H1 (cell line): ENCODE measurements at regions of chr17 and their contacts with region 1.

Region 1: GRCh38 chr17:45385331-45385997 is 47.2 kb downstream of the ARHGAP27 start:
- DNase-seq: peak; percentile 80 to 99
- H3K4me3 ChIP-seq: no peak overlapping the region
- H3K27ac ChIP-seq: no peak overlapping the region
- H3K4me1 ChIP-seq: peaks cover 0 to 13% (median 8%) of the 10 kb centered on the region in 4 experiments; a peak in 3 of 7 replicates
- H3K27me3 ChIP-seq: 0 out of 7 replicates have a peak, but pooled peaks cover 0 to 3% (median 0%) of the 10 kb centered on the region in 4 experiments
- CTCF ChIP-seq: peak; percentile 90 to 98 (median 98)
- EP300 ChIP-seq: no peak
- POLR2A ChIP-seq: no peak
- RAD21 ChIP-seq: peak; percentile 99

Region 2: DNA sequence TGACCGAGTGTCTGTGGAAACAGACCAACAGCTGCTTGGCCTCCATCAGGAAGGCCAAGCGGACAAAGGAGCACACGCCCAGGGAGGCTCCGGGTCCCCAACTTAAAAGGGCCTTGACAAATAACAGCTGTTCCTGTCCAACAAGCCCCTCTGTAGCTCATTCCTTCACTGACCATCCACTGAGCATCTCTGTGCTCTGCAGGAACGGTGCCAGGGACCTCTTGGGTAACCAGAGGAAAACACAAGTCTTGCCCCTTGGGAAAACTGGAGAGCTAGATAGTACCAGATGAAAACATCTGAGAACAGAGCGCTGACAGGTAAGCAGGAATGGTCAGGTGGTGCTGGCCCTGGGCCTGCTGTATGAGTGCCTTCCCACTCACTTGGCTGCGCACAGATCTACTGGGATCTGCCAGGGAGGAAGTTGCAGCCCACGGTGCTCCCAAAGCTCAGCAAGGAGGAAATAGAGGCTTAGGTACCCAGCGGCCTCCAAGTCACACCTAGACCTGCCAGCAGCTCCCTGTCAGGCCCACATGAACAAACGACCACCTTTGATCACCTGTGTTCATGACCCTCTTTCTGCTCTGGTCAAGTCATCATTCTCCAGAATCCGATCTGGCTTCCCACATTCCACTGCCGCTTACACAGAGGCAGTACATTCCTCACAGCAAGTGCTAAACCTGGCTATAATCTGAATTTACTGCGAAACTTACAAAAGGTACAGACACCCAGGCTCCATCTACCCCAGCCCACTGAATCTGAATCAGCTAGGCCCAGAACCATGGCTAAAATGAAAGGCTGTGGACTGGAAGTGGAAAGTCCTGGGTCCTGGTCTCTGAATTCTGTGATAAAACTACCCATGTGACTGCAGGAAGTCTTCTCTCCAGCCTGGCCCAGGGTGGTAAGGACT is 346.5 kb before region 1 on chr17:
- CTCF ChIA-PET with region 1: no interaction called
- POLR2A ChIA-PET with region 1: no interaction called
- DNase-seq: no peak
- H3K4me3 ChIP-seq: no peak overlapping the region
- H3K27ac ChIP-seq: no peak overlapping the region
- H3K4me1 ChIP-seq: peaks cover 4 to 11% (median 7%) of the 10 kb centered on the region in 4 experiments
- H3K27me3 ChIP-seq: no peaks in the 10 kb centered on the region
- CTCF ChIP-seq: no peak
- EP300 ChIP-seq: no peak
- POLR2A ChIP-seq: no peak
- RAD21 ChIP-seq: no peak

Region 3: GRCh38 chr17:45228763-45229539 is 156.5 kb before region 1 on chr17:
- CTCF ChIA-PET with region 1: interaction called, 14 read pairs
- POLR2A ChIA-PET with region 1: no interaction called
- DNase-seq: no peak
- H3K4me3 ChIP-seq: no peak overlapping the region
- H3K27ac ChIP-seq: no peak overlapping the region
- H3K4me1 ChIP-seq: peaks cover 5 to 29% (median 20%) of the 10 kb centered on the region in 4 experiments
- H3K27me3 ChIP-seq: peaks cover 0 to 5% (median under 1%) of the 10 kb centered on the region in 4 experiments; a peak in 3 of 7 replicates
- CTCF ChIP-seq: no peak
- EP300 ChIP-seq: no peak
- POLR2A ChIP-seq: no peak
- RAD21 ChIP-seq: no peak

Region 4: DNA sequence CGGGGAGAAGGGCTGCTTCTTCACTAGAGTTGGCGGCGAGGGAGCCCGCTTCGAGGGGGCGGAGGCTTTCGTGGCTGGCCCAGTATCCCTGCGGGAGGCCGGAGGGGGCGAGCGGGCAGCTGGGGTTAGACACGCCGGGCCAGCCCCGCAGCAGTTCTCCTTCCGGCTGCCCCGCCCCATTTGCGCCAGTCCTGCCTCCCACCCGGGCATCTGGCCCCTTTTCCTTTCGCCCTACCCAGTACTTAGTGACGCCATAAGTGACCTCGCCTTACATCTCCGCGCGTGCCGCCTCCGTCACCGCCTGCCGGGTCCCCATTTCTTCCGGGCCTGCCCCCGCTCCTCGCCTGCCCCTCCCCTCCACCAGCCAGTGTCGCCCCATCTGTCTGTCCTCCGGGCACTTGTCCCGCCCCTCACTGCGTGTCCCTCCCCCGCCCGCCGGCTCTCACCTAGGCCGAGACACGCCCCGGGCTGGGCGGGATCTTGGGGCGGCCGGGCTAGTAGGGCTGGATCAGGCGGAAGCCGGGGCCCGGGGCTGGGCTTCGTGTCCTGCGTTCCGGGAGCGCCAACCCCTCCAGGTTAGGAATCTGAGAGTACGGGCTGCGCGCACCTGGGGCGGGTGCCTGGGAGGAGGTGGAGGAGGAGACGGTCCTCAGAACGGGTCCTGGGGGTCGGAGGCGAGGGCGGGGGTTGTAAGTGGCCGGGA is 137.9 kb before region 1 on chr17:
- CTCF ChIA-PET with region 1: interaction called, 16 read pairs
- POLR2A ChIA-PET with region 1: interaction called, 4 read pairs
- DNase-seq: peak; percentile 94 to 97
- H3K4me3 ChIP-seq: peak overlapping the region; percentile 70 to 82 (median 74)
- H3K27ac ChIP-seq: peak overlapping the region; percentile 71
- H3K4me1 ChIP-seq: peaks cover 3 to 15% (median 12%) of the 10 kb centered on the region in 4 experiments
- H3K27me3 ChIP-seq: no peaks in the 10 kb centered on the region; a peak in 2 of 7 replicates
- CTCF ChIP-seq: no peak
- EP300 ChIP-seq: peak in 1 of 2 experiments; percentile 53; a peak in 1 of 3 replicates
- POLR2A ChIP-seq: peak in 1 of 2 experiments; percentile 81; a peak in 2 of 3 replicates
- RAD21 ChIP-seq: no peak

Region 5: GRCh38 chr17:45293413-45294211 is 91.9 kb before region 1 on chr17:
- CTCF ChIA-PET with region 1: interaction called, 579 read pairs
- POLR2A ChIA-PET with region 1: no interaction called
- DNase-seq: no peak
- H3K4me3 ChIP-seq: no peak overlapping the region
- H3K27ac ChIP-seq: no peak overlapping the region
- H3K4me1 ChIP-seq: peaks cover 0 to 5% (median 0%) of the 10 kb centered on the region in 4 experiments; a peak in 1 of 7 replicates
- H3K27me3 ChIP-seq: no peaks in the 10 kb centered on the region
- CTCF ChIP-seq: peak in 1 of 3 experiments; percentile 16; a peak in 1 of 4 replicates
- EP300 ChIP-seq: no peak
- POLR2A ChIP-seq: no peak
- RAD21 ChIP-seq: no peak; a peak in 1 of 4 replicates

Region 6: DNA sequence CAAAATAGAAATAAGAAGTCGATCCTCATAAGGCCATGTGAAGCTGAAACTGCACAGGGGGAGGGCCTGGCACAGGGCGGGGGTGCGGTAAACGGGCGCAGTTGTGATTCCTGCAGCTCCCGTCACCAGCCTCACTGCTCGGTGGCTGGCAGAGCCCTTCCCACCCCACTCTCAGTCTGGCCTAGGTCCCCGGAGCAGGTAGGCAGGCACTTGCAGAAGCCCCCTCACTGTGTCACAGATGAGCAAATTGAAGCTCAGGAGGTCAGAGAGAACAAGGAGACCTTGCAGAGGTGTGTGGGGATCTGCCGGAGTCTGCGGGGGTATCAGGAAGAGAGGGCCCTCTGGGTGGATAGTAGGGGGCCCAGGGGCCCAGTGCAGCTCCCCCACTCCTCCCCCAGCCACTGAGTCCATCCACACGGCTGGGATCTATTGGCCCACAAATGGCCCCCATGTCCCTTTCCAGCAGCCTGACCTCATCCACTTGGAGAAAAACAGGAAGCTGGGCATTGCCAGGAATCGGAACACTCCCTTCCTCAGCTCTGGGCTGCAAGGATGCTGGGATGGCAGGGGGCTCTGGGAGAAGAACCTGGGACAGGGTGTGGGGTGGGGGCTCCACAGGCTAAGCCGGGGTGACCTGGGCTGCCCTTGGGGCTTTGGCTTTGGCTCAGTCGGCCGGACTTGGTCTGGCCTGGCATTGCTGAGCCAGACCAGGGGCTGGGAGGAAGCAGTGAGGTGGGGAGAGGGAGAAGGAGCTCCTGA is 47.3 kb before region 1 on chr17:
- CTCF ChIA-PET with region 1: interaction called, 14 read pairs
- POLR2A ChIA-PET with region 1: interaction called, 3 read pairs
- DNase-seq: no peak
- H3K4me3 ChIP-seq: no peak overlapping the region
- H3K27ac ChIP-seq: no peak overlapping the region
- H3K4me1 ChIP-seq: peaks cover 2 to 8% (median 4%) of the 10 kb centered on the region in 4 experiments; a peak in 6 of 7 replicates
- H3K27me3 ChIP-seq: peaks cover 0 to 19% (median 5%) of the 10 kb centered on the region in 4 experiments; a peak in 2 of 7 replicates
- CTCF ChIP-seq: no peak
- EP300 ChIP-seq: no peak
- POLR2A ChIP-seq: no peak
- RAD21 ChIP-seq: no peak

Region 7: DNA sequence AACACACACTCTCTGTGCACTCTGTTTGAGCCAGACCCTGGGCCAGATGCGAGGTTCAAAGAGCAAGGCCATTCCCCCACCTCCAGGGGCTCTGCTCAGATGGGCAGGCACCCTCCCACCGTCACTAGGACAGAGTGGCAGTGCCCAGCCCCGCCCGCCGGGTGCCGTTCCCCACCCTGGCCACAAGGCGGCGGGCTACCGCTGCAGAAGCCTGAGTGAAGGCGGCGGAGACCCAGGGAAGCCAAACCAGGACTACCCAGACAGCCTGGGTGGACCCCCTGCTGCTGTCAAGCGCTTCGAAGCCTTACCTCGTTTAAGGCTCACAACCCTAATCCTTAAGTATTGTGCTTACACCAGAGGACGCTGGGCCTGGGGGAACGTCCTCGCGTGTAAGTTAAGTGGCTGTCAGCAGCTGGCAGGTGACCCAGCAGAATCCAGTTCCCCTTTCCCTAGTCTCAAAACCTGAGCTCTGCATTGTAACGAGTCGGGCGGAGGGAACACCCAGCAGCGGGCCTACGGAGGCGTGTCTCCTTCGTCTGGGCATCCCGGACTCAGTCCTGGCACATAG is 42.7 kb after region 1 on chr17:
- CTCF ChIA-PET with region 1: interaction called, 331 read pairs
- POLR2A ChIA-PET with region 1: no interaction called
- DNase-seq: peak in 1 of 2 experiments; percentile 96
- H3K4me3 ChIP-seq: peak overlapping the region in 1 of 4 experiments; percentile 65; a peak in 3 of 8 replicates
- H3K27ac ChIP-seq: no peak overlapping the region
- H3K4me1 ChIP-seq: peaks cover 6 to 30% (median 20%) of the 10 kb centered on the region in 4 experiments
- H3K27me3 ChIP-seq: peaks cover 21 to 46% (median 40%) of the 10 kb centered on the region in 4 experiments
- CTCF ChIP-seq: peak; percentile 92 to 94 (median 92)
- EP300 ChIP-seq: peak in 1 of 2 experiments; percentile 15; a peak in 1 of 3 replicates
- POLR2A ChIP-seq: no peak
- RAD21 ChIP-seq: peak; percentile 74 to 87